ENCODE measurements at regions of chr10 and their contacts with region 1.

Region 1: DNA sequence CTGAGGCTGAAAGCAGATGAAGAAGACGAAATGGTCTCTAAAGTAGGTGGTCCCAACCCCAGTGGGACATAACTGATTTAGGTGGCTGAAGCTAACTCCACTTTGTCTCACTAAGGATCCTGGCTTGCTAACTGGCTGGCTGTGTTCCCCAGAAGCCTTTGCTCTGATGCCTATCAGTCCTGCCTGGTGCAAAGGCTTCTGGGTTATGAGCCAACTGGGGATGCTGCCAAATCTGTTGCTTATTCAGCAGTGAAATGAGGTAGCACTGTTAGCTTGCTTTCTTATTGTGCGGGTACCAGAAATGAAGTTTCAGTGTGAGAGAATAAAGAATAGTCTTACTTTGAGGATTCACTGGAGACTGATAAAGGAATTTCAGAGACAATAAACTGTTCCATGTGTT is 18.1 kb downstream of the PRKG1 start:
- DNase-seq: no peak
- ATAC-seq: no peak
- H3K4me3 ChIP-seq: no peak overlapping the region
- H3K27ac ChIP-seq: no peak overlapping the region
- H3K4me1 ChIP-seq: no peaks in the 10 kb centered on the region; the same call in 1 of the 2 replicates
- H3K27me3 ChIP-seq: peaks cover 3% of the 10 kb centered on the region; the same call in 1 of the 2 replicates
- CTCF ChIP-seq: no peak

Region 2: DNA sequence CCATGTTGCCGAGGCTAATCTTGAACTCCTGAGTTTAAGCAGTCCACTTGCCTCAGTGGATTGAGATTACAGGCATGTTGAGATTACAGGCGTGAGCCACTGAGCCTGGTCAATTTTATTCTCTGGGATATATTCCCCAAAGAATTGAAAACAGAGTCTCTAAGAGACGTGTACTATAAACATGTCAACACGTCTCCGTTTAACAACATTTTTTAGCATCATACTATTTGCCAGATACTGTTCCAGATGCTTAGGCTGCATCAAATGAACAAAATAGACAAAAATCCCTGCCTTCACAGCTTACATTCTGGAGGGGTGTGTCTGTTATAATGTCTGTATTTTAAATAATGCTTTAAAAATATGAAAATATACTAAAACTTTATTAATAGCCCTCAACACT is 72.2 kb before region 1 on chr10:
- CTCF ChIA-PET with region 1: no interaction called
- POLR2A ChIA-PET with region 1: no interaction called
- in situ Hi-C with region 1: no loop called
- intact Hi-C with region 1: no loop called
- DNase-seq: no peak
- ATAC-seq: no peak
- H3K4me3 ChIP-seq: no peak overlapping the region
- H3K27ac ChIP-seq: no peak overlapping the region
- H3K4me1 ChIP-seq: no peaks in the 10 kb centered on the region
- H3K27me3 ChIP-seq: 0 out of 2 replicates have a peak, but pooled peaks cover 2% of the 10 kb centered on the region
- CTCF ChIP-seq: no peak

Region 3: DNA sequence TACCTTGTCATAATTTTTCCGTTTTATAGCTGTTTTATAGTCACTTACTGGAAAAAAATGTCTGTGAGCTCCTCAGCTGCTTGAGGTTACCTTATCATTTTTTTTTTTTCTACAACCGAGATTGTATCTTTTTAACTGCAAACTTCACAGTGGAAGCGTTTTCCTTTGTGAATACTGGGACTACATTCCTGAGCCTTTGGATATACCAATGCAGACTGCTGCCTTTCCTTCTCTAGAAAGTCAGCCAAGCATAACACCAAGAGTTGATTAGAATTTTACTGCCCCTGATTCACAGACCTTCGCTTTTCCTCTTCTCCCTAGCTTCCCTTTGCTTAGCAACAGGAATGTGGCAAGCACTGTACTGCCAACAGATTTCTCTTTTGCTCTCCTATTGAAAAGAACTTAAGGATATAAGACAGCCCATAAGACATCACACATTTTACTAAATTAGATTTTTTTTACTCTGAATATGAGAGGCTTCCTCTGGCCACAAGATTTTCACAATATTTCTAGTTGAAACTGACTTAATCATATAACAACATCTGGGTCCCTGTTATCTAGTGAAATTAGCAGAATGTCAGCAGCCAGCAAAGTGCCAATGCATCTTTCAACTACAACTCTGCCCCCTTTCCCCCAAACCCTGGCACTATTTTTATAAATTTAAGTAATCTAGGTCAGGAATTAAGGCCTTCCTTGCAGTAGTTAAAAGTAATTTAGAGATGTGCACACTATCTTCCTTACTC is 152.5 kb after region 1 on chr10:
- CTCF ChIA-PET with region 1: no interaction called
- POLR2A ChIA-PET with region 1: no interaction called
- in situ Hi-C with region 1: no loop called
- intact Hi-C with region 1: loop called (anchors 10 kb)
- DNase-seq: no peak
- ATAC-seq: peak; percentile 92
- H3K4me3 ChIP-seq: no peak overlapping the region
- H3K27ac ChIP-seq: peak overlapping the region; percentile 55
- H3K4me1 ChIP-seq: peaks cover 5% of the 10 kb centered on the region; the same call in 1 of the 2 replicates
- H3K27me3 ChIP-seq: no peaks in the 10 kb centered on the region
- CTCF ChIP-seq: no peak

Measured in Panc1 (cell line).